H1 (cell line): ENCODE measurements at regions of chr12 and their contacts with region 1.

Region 1: GRCh38 chr12:38544330-38545066 is 227.9 kb downstream of the ALG10B start:
- DNase-seq: peak in 1 of 2 experiments; percentile 58
- H3K4me3 ChIP-seq: peak overlapping the region in 1 of 4 experiments; percentile 15; a peak in 1 of 8 replicates
- H3K27ac ChIP-seq: peak overlapping the region; percentile 38; the same call in 1 of the 2 replicates
- H3K4me1 ChIP-seq: peaks cover 3 to 17% (median 6%) of the 10 kb centered on the region in 4 experiments; a peak in 5 of 7 replicates
- H3K27me3 ChIP-seq: no peaks in the 10 kb centered on the region
- CTCF ChIP-seq: peak; percentile 35 to 69 (median 45)
- EP300 ChIP-seq: no peak
- POLR2A ChIP-seq: no peak
- RAD21 ChIP-seq: peak; percentile 32 to 52

Region 2: DNA sequence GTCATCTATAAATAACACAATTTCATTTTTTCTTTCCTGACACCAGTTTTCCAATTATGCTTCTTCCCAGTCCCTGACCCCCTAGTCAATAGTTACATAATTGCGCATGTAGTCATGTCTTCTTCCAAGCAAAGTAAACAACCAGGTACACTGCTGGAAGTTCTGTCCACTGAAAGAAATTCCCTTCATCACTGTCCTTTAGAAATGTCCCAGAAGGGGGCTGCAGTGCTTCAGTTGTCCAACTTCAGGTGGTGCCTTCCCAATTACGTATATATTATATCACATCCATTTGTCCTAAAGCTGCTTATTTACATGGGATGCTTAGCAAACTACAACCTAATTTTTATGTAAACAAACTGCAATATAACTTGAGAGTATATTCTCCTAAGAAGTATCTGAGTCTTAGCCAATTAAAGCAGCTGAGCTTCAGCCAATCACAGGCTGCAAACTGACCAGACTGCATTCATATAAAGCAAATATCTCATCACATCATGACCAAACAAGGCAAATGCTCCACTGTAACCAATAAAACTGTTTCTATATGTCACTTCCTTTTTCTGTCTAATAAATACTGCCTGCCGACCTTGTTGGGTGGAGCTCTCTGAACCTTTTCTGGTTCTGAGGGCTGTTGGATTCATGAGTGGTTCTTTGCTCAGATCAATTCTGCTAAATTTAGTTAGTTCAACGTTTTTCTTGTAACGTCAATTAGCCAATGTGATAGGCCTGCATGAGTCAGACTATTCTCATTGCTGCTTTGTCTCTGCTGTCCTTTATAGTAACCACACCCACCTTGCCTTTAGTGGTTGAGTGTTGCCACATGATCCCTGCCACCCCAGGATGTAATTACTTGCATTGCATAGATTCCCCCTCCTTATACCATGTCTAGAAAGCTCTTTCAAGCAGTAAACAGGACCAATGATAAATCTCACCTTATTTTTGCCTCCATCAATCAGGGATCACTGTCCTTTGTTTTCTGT is 11.4 kb after region 1 on chr12:
- CTCF ChIA-PET with region 1: interaction called, 18 read pairs
- POLR2A ChIA-PET with region 1: no interaction called
- DNase-seq: no peak
- H3K4me3 ChIP-seq: no peak overlapping the region
- H3K27ac ChIP-seq: no peak overlapping the region
- H3K4me1 ChIP-seq: peaks cover 0 to 3% (median 0%) of the 10 kb centered on the region in 4 experiments; a peak in 1 of 7 replicates
- H3K27me3 ChIP-seq: no peaks in the 10 kb centered on the region
- CTCF ChIP-seq: no peak
- EP300 ChIP-seq: no peak
- POLR2A ChIP-seq: no peak
- RAD21 ChIP-seq: peak; percentile 18 to 26; a peak in 2 of 4 replicates